Activated CD4-positive, alpha-beta memory T cell treated with anti-CD3 and anti-CD28 coated beads, Interleukin-2, amount 10 ng/mL, durations not matched to agents 7 days and 5 days (primary cell): ENCODE measurements at regions of chr1 and their contacts with region 1.

Region 1: DNA sequence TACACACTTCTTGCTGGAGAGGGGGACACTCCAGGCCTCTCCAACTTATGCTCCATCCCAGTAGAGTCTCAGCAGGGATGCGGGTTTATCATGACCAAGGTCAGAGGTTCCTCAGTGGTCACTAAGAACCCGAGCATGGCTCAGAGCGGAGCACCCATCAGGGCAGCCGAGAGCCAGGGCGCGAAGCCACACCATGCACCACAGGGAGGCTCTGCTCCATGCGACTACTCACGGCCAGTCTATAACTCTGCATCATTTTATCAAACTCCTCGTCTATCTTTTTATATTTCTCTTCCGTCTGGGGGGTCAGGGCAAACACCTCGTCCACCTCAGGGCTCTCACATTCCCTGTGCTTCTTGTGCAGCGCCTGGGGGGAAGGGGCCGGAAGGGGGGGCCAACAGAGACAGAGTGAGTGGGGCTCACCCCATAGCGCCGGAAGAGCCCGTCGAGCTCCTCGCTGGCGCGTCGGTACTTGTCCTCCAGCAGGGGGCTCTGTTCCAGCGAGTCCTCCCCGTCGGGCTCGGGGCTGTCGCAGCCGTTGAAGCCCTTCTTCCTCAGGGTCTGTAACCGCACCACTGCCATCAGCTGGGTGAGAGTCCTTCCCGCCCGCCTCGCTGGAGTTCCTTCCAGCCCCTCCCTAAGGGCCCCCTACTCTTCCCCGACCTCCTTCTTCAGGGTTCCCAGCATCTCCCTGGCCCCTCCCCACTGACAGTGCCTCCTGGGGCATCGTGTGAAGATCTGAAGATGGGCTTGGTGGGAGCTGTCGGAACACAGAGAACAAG is 20.0 kb downstream of the MEF2D start:
- DNase-seq: peak; percentile 74
- H3K4me3 Mint-ChIP-seq: no peak overlapping the region
- H3K27ac Mint-ChIP-seq: peak overlapping the region; percentile 53
- H3K4me1 Mint-ChIP-seq: peaks cover 51% of the 10 kb centered on the region
- H3K27me3 Mint-ChIP-seq: no peaks in the 10 kb centered on the region

Region 2: GRCh38 chr1:156456622-156457465 is 23.8 kb before region 1 on chr1:
- CTCF ChIA-PET with region 1: interaction called, 18 read pairs
- POLR2A ChIA-PET with region 1: interaction called, 5 read pairs
- DNase-seq: peak; percentile 94
- H3K4me3 Mint-ChIP-seq: peak overlapping the region; percentile 83
- H3K27ac Mint-ChIP-seq: peak overlapping the region; percentile 97
- H3K4me1 Mint-ChIP-seq: peaks cover 30% of the 10 kb centered on the region
- H3K27me3 Mint-ChIP-seq: peaks cover 6% of the 10 kb centered on the region

Region 3: DNA sequence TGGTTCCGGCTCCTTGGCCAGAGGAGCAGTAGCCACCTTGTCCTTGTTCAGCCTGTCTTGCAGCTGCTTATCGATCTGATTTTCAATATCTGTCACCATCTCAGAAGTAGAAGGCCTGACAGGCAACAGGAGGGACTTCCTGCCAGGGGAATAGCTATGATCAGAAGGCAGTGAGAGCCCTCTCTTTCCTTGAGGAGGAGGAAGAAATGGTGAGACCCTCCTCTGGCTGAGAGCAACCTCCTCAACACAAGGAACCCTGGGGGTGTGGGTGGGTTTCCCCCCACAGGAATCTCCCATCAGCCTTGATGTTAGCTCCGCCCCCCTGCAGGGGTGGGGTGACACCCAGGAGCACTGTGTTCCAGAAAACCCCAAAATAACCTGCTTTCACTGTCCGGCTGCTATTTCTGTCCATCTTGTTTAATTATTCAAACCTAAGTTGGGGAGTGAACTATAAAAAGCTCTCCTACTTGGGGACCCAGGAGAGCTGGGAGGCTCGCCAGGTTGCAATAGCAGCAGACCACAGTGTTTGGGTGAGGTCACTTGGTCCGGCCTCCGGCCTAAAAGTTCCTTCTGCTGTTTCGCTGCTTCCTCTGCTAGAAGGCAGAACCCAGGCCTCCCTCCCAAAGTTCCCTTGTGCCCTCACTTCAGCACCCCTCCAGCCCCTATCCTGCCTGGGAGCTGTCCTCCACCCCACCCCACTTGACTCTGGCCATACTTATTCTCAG is 27.7 kb after region 1 on chr1:
- CTCF ChIA-PET with region 1: interaction called, 17 read pairs
- POLR2A ChIA-PET with region 1: interaction called, 286 read pairs
- DNase-seq: no peak
- H3K4me3 Mint-ChIP-seq: peak overlapping the region; percentile 56
- H3K27ac Mint-ChIP-seq: peak overlapping the region; percentile 65
- H3K4me1 Mint-ChIP-seq: peaks cover 76% of the 10 kb centered on the region
- H3K27me3 Mint-ChIP-seq: peaks cover 2% of the 10 kb centered on the region

Region 4: GRCh38 chr1:156524481-156524869 is 43.9 kb after region 1 on chr1:
- CTCF ChIA-PET with region 1: interaction called, 17 read pairs
- POLR2A ChIA-PET with region 1: interaction called, 6 read pairs
- DNase-seq: no peak
- H3K4me3 Mint-ChIP-seq: no peak overlapping the region
- H3K27ac Mint-ChIP-seq: peak overlapping the region; percentile 38
- H3K4me1 Mint-ChIP-seq: peaks cover 35% of the 10 kb centered on the region
- H3K27me3 Mint-ChIP-seq: peaks cover 3% of the 10 kb centered on the region

Region 5: GRCh38 chr1:156571949-156572662 is 91.5 kb after region 1 on chr1 and contains the start of gene IQGAP3:
- CTCF ChIA-PET with region 1: interaction called, 22 read pairs
- POLR2A ChIA-PET with region 1: interaction called, 7 read pairs
- DNase-seq: peak; percentile 84
- H3K4me3 Mint-ChIP-seq: peak within 1 kb of the TSS; percentile 98
- H3K27ac Mint-ChIP-seq: peak within 1 kb of the TSS; percentile 51
- H3K4me1 Mint-ChIP-seq: peaks cover 26% of the 10 kb centered on the region
- H3K27me3 Mint-ChIP-seq: peaks cover 25% of the 10 kb centered on the region
- total RNA-seq, gene IQGAP3: 18.4 to 19.7 TPM

Region 6: DNA sequence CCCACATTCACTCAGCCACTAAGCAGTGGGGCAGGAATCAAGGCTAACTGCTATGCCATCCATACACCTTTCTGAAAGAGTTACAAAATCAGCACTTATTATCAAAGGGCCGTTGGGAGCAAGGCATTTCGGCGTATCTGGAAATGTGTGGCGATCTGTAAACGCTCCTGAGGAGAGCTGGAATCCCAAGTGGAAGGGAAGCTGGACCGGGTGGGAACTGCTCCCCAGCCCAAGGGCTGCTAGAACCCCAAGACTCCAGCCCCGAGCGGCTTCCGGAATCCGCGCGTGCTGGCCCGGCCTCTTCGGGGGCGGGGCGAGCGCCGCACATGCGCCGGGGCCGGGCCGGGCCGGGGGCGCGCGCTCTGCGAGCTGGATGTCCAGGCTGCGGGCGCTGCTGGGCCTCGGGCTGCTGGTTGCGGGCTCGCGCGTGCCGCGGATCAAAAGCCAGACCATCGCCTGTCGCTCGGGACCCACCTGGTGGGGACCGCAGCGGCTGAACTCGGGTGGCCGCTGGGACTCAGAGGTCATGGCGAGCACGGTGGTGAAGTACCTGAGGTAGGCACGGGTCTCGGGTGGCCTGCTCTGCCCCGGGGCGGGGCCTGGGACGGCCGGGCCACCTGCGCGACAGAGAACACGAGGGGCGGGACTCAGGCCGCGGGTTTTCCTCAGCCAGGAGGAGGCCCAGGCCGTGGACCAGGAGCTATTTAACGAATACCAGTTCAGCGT is 111.0 kb after region 1 on chr1 and contains the start of gene NAXE:
- CTCF ChIA-PET with region 1: interaction called, 11 read pairs
- POLR2A ChIA-PET with region 1: interaction called, 6 read pairs
- DNase-seq: peak; percentile 73
- H3K4me3 Mint-ChIP-seq: peak within 1 kb of the TSS; percentile 79
- H3K27ac Mint-ChIP-seq: peak within 1 kb of the TSS; percentile 76
- H3K4me1 Mint-ChIP-seq: peaks cover 35% of the 10 kb centered on the region
- H3K27me3 Mint-ChIP-seq: no peaks in the 10 kb centered on the region
- total RNA-seq, gene NAXE: 45.3 to 46.1 TPM

Region 7: GRCh38 chr1:156608036-156608674 is 127.6 kb after region 1 on chr1:
- CTCF ChIA-PET with region 1: interaction called, 16 read pairs
- POLR2A ChIA-PET with region 1: no interaction called
- DNase-seq: peak; percentile 67
- H3K4me3 Mint-ChIP-seq: no peak overlapping the region
- H3K27ac Mint-ChIP-seq: no peak overlapping the region
- H3K4me1 Mint-ChIP-seq: peaks cover 5% of the 10 kb centered on the region
- H3K27me3 Mint-ChIP-seq: peaks cover 14% of the 10 kb centered on the region